K562 (cell line): ENCODE measurements at regions of chr10 and their contacts with region 1.

Region 1: GRCh38 chr10:72331601-72332422 is 22.9 kb downstream of the DNAJB12 start:
- DNase-seq: peak in 1 of 4 experiments; percentile 26
- ATAC-seq: no peak
- H3K4me3 ChIP-seq: no peak overlapping the region
- H3K27ac ChIP-seq: no peak overlapping the region
- H3K4me1 ChIP-seq: peaks cover 18 to 44% of the 10 kb centered on the region in 2 experiments; a peak in 4 of 5 replicates
- H3K27me3 ChIP-seq: no peaks in the 10 kb centered on the region
- CTCF ChIP-seq: no peak
- EP300 ChIP-seq: no peak
- POLR2A ChIP-seq: peak; percentile 47
- RAD21 ChIP-seq: no peak

Region 2: DNA sequence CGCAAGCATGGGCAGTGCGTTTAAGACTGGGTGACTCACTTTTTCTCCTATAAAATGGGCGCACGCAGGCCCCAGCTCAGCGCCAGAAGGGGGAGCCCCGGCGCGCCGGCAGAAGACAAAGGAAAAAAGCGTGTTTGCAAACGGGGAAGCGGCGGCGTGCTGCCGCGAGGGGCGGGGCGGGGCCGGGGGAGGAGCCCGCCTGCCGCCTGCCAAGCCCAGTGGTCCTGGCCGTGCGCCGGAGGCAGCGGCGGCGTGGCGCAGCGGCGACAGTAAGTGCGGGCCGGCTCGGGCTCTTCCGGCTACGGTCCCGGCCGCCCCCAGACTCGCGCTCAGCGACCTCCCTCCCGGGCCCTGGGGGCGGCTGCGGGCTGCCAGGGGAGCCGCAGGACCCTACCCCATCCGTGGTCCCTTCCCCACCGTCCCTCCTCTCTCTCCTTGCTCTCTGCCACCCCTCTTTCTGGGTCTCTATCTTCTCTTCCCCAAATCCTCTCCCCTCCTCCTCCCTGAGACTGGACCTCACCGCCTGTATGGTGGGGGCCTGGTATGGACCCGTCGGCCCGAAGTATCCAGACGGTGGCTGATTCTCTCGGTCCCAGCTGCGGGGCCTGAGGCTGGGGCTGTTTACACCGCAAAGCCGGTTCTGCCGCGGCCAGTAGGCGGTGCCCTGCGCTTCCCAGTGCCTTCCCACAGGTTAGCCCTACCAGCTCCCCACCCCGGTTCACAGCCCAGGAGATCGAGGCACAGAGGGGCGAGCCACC is 1012.6 kb before region 1 on chr10 and contains the start of gene SLC29A3:
- CTCF ChIA-PET with region 1: no interaction called
- POLR2A ChIA-PET with region 1: no interaction called
- in situ Hi-C with region 1: loop called (anchors 25 kb)
- intact Hi-C with region 1: no loop called
- DNase-seq: peak; percentile 92 to 96 (median 94)
- ATAC-seq: peak; percentile 96
- H3K4me3 ChIP-seq: peak within 1 kb of the TSS; percentile 75
- H3K27ac ChIP-seq: peak within 1 kb of the TSS; percentile 62
- H3K4me1 ChIP-seq: peaks cover 10 to 23% of the 10 kb centered on the region in 2 experiments; a peak in 4 of 5 replicates
- H3K27me3 ChIP-seq: no peaks in the 10 kb centered on the region
- CTCF ChIP-seq: peak; percentile 90 to 96 (median 94)
- EP300 ChIP-seq: no peak
- POLR2A ChIP-seq: peak; percentile 80
- RAD21 ChIP-seq: peak; percentile 84 to 91
- polyA plus RNA-seq, gene SLC29A3: 6.3 to 10.3 TPM

Region 3: DNA sequence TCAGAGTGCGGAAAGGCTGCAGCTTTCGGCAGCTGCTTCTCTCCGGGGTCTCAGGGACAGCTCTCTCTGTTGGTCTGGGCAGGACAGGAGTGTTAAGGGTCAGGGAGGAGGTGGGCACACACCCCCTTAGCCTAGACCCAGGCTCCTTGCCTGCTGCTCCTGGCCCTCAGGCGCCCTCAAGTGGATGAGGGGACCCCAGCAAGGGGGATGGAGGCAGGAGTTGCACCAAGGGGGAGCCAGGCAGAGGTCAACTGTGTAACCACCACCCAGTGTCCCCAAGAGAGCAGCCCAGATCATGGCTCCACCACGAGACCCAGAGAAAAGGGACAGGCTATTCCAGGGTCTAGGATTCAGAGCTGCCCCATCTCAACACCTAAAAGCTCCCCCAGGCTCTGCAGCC is 270.3 kb before region 1 on chr10:
- CTCF ChIA-PET with region 1: interaction called, 3 read pairs
- POLR2A ChIA-PET with region 1: interaction called, 3 read pairs
- in situ Hi-C with region 1: loop called (anchors 10 kb)
- intact Hi-C with region 1: loop called (anchors 5 kb)
- DNase-seq: peak; percentile 54 to 68 (median 58)
- ATAC-seq: peak; percentile 79
- H3K4me3 ChIP-seq: no peak overlapping the region
- H3K27ac ChIP-seq: no peak overlapping the region
- H3K4me1 ChIP-seq: peaks cover 3 to 33% of the 10 kb centered on the region in 2 experiments; a peak in 3 of 5 replicates
- H3K27me3 ChIP-seq: peaks cover 2 to 23% of the 10 kb centered on the region in 2 experiments; a peak in 2 of 5 replicates
- CTCF ChIP-seq: peak; percentile 68 to 83 (median 71)
- EP300 ChIP-seq: no peak
- POLR2A ChIP-seq: no peak
- RAD21 ChIP-seq: peak; percentile 27 to 52; a peak in 3 of 4 replicates

Region 4: DNA sequence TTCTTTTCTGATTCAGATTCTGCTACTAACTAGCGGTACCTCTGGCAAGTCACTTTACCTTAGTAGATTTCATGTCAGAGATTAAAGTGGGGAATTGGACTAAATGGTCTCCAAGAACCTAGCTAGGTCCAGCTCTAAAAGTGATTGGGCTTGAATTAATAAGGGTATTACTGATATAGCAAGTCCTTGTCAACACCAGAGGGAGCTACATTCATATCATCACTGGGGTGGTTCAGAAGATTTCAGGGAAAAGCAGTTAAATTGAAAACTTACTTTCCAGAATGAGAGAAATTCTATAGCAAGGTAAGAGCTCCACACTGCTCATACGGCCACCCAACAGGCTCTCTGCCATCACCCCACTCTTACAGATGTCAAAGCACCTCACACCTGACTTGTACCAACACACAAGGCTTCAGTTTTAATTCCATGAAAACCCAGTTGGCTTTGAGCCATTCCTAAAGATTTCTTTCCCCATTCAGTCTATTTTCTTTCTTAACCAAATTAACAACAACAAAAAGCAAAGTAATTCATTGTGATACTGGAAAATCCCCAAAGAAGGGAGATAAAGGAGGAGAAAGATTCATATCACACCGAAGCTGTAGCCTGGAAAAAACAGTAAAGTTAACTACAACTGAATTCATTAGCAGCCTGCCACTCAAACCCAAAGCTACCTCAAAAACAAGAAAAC is 205.5 kb before region 1 on chr10:
- CTCF ChIA-PET with region 1: interaction called, 15 read pairs
- POLR2A ChIA-PET with region 1: interaction called, 4 read pairs
- in situ Hi-C with region 1: loop called (anchors 10 kb)
- intact Hi-C with region 1: loop called (anchors 1 kb)
- DNase-seq: peak; percentile 27 to 59 (median 46)
- ATAC-seq: peak; percentile 79
- H3K4me3 ChIP-seq: no peak overlapping the region
- H3K27ac ChIP-seq: no peak overlapping the region
- H3K4me1 ChIP-seq: peaks cover 0 to 5% of the 10 kb centered on the region in 2 experiments; a peak in 1 of 5 replicates
- H3K27me3 ChIP-seq: no peaks in the 10 kb centered on the region
- CTCF ChIP-seq: peak; percentile 47 to 82 (median 58); a peak in 5 of 6 replicates
- EP300 ChIP-seq: no peak
- POLR2A ChIP-seq: no peak
- RAD21 ChIP-seq: peak; percentile 77 to 89

Region 5: GRCh38 chr10:72223743-72224101 is 108.1 kb before region 1 on chr10:
- CTCF ChIA-PET with region 1: interaction called, 7 read pairs
- POLR2A ChIA-PET with region 1: interaction called, 3 read pairs
- in situ Hi-C with region 1: loop called (anchors 5 kb)
- intact Hi-C with region 1: loop called (anchors 2 kb)
- DNase-seq: no peak
- ATAC-seq: no peak
- H3K4me3 ChIP-seq: no peak overlapping the region
- H3K27ac ChIP-seq: no peak overlapping the region
- H3K4me1 ChIP-seq: peaks cover 4 to 15% of the 10 kb centered on the region in 2 experiments; a peak in 3 of 5 replicates
- H3K27me3 ChIP-seq: no peaks in the 10 kb centered on the region
- CTCF ChIP-seq: no peak
- EP300 ChIP-seq: no peak
- POLR2A ChIP-seq: no peak
- RAD21 ChIP-seq: no peak